Activated CD4-positive, alpha-beta T cell treated with anti-CD3 and anti-CD28 coated beads, Interleukin-2, amount 10 ng/mL, durations not matched to agents 24 days and 14 days (primary cell): ENCODE measurements at regions of chr1 and their contacts with region 1.

Region 1: GRCh38 chr1:78038491-78038939 is 7.3 kb upstream of the GIPC2 start:
- DNase-seq: no peak
- H3K4me3 Mint-ChIP-seq: no peak overlapping the region
- H3K27ac Mint-ChIP-seq: no peak overlapping the region
- H3K4me1 Mint-ChIP-seq: peaks cover 7% of the 10 kb centered on the region
- H3K27me3 Mint-ChIP-seq: peaks cover 31% of the 10 kb centered on the region

Region 2: DNA sequence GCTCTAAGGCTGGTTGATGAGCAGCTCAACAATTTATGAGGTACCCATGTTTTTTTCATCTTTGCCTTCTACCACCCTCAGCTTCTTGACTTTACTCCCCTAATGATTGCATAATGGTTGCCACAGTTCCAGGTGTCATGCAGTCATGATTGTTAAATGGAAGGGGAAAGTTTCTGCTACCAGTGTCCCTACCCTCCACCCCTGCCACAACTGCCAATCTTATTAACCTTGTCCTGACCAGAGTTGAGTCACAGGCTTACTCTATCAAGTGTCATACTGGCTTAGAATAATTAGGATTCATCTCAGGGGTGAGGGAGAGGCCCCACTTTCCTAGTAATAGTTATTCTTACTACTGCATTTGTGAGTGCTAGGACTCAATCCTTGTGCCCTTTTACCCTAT is 51.7 kb before region 1 on chr1:
- intact Hi-C with region 1: loop called (anchors 5 kb)
- DNase-seq: no peak
- H3K4me3 Mint-ChIP-seq: no peak overlapping the region
- H3K27ac Mint-ChIP-seq: no peak overlapping the region
- H3K4me1 Mint-ChIP-seq: peaks cover 22% of the 10 kb centered on the region
- H3K27me3 Mint-ChIP-seq: no peaks in the 10 kb centered on the region

Region 3: GRCh38 chr1:78303620-78304019 is 265.1 kb after region 1 on chr1:
- intact Hi-C with region 1: no loop called
- DNase-seq: no peak
- H3K4me3 Mint-ChIP-seq: no peak overlapping the region
- H3K27ac Mint-ChIP-seq: no peak overlapping the region
- H3K4me1 Mint-ChIP-seq: no peaks in the 10 kb centered on the region
- H3K27me3 Mint-ChIP-seq: no peaks in the 10 kb centered on the region